Activated CD4-positive, alpha-beta T cell treated with anti-CD3 and anti-CD28 coated beads, Interleukin-2, amount 10 ng/mL, durations not matched to agents 24 days and 14 days (primary cell): ENCODE measurements at regions of chr10 and their contacts with region 1.

Region 1: DNA sequence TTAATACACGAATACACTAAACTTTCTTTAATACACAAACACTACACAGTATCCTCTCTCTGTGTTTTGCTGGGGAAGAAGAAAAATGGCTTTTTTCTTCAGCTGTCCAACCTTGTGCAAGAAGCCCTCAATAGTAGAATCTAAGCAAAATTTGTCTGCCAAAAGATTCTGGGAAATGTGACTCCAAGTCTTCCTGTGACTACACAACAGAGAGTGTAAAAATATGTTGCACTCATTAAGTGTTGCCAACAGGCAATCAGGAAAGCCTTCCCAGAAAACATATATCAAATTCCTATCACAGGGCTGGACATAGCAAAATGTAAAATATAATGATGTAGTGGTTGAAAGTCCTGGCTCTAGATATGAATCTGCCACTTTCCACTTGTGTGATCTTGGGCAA is 825.1 kb upstream of the ZWINT start:
- DNase-seq: no peak
- H3K4me3 Mint-ChIP-seq: no peak overlapping the region
- H3K27ac Mint-ChIP-seq: no peak overlapping the region
- H3K4me1 Mint-ChIP-seq: no peaks in the 10 kb centered on the region
- H3K27me3 Mint-ChIP-seq: no peaks in the 10 kb centered on the region

Region 2: GRCh38 chr10:57202361-57202760 is 16.2 kb after region 1 on chr10:
- intact Hi-C with region 1: loop called (anchors 1 kb)
- DNase-seq: no peak
- H3K4me3 Mint-ChIP-seq: no peak overlapping the region
- H3K27ac Mint-ChIP-seq: no peak overlapping the region
- H3K4me1 Mint-ChIP-seq: no peaks in the 10 kb centered on the region
- H3K27me3 Mint-ChIP-seq: no peaks in the 10 kb centered on the region